CD4-positive, alpha-beta memory T cell (primary cell): ENCODE measurements at regions of chr17 and their contacts with region 1.

Region 1: DNA sequence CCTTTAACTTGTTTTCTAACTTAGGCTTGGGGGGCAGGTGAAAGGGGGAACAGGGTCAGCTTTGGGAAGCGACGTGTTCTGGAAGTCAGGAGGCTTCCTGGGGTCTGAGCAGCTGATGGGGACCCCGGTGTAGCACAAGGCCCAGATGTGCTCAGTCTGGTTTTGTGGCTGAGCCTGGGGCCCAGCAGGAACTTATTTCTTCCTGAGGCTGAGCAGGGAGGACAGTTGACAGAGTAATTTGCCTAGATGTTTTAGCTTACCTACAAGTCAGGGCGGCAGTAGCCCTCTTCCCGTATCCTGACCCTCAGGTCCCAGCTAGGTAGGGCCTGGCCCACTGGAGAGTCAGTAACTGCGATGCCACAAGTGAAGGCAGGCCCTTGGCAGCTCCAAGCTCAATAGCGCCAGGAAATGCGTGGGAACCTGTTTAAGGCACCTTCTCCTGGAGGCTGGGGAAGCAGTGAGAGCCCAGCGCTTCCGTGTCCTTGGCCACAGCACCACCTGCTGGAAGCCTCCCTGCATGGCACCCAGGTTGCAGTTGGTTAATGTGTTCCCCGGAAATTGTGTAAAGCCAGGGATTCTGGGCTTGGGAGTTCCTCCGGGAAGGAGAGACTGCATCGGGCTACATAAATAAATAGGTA is 5.2 kb downstream of the CCR7 start:
- DNase-seq: peak; percentile 77 to 84 (median 81)
- H3K4me3 ChIP-seq: peak overlapping the region; percentile 94 to 96
- H3K4me3 Mint-ChIP-seq: peak overlapping the region; percentile 88 to 98 (median 96)
- H3K27ac ChIP-seq: peak overlapping the region; percentile 94
- H3K27ac Mint-ChIP-seq: peak overlapping the region; percentile 95 to 100 (median 99)
- H3K4me1 ChIP-seq: peaks cover 82% of the 10 kb centered on the region
- H3K4me1 Mint-ChIP-seq: peaks cover 42 to 99% (median 72%) of the 10 kb centered on the region in 4 donors
- H3K27me3 ChIP-seq: no peaks in the 10 kb centered on the region
- H3K27me3 Mint-ChIP-seq: no peaks in the 10 kb centered on the region

Region 2: DNA sequence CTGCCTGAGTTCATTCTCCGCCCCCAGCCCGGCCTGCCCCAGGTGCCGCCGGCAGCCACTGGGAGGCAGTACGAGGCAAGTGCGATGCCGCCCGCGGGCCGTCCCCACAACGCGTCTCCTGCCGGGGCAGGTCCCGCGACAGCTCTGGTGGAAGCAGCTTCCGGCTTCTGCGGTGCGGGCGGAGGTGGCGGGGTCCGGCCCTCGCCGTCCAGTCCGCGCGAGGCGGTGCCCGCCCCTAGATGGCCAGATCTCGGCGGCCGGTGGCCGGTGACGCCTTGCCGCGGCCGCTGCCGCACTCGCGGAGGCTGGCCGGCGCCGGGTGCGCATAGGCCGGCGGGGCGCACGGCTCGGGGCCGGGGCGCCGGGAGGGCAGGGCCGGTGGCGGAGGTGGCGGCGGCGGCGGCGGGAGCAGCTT is 197.4 kb before region 1 on chr17:
- CTCF ChIA-PET with region 1: interaction called, 8 read pairs
- POLR2A ChIA-PET with region 1: interaction called, 13 read pairs
- intact Hi-C with region 1: loop called (anchors 1 kb)
- DNase-seq: peak; percentile 72 to 76 (median 74)
- H3K4me3 ChIP-seq: peak overlapping the region in 1 of 2 donors; percentile 47
- H3K4me3 Mint-ChIP-seq: peak overlapping the region in 7 of 8 donors; percentile 39 to 82 (median 64)
- H3K27ac ChIP-seq: no peak overlapping the region
- H3K27ac Mint-ChIP-seq: peak overlapping the region in 3 of 7 donors; percentile 11 to 69 (median 57)
- H3K4me1 ChIP-seq: peaks cover 21% of the 10 kb centered on the region
- H3K4me1 Mint-ChIP-seq: peaks cover 5 to 12% (median 9%) of the 10 kb centered on the region in 4 donors
- H3K27me3 ChIP-seq: no peaks in the 10 kb centered on the region
- H3K27me3 Mint-ChIP-seq: peaks cover 0 to 7% of the 10 kb centered on the region in 2 donors

Region 3: GRCh38 chr17:40417609-40418427 is 142.3 kb before region 1 on chr17 and contains the start of gene TOP2A:
- CTCF ChIA-PET with region 1: interaction called, 14 read pairs
- POLR2A ChIA-PET with region 1: interaction called, 23 read pairs
- intact Hi-C with region 1: loop called (anchors 5 kb)
- DNase-seq: peak; percentile 98 to 99 (median 98)
- H3K4me3 ChIP-seq: peak within 1 kb of the TSS; percentile 77 to 91
- H3K4me3 Mint-ChIP-seq: peak within 1 kb of the TSS; percentile 90 to 97 (median 95)
- H3K27ac ChIP-seq: peak within 1 kb of the TSS; percentile 49
- H3K27ac Mint-ChIP-seq: peak within 1 kb of the TSS; percentile 69 to 97 (median 93)
- H3K4me1 ChIP-seq: peaks cover 37% of the 10 kb centered on the region
- H3K4me1 Mint-ChIP-seq: peaks cover 15 to 35% (median 28%) of the 10 kb centered on the region in 4 donors
- H3K27me3 ChIP-seq: no peaks in the 10 kb centered on the region
- H3K27me3 Mint-ChIP-seq: no peaks in the 10 kb centered on the region
- total RNA-seq, gene TOP2A: 0.47 to 1.1 TPM

Region 4: GRCh38 chr17:40474419-40475002 is 85.6 kb before region 1 on chr17:
- CTCF ChIA-PET with region 1: interaction called, 24 read pairs
- POLR2A ChIA-PET with region 1: interaction called, 44 read pairs
- intact Hi-C with region 1: loop called (anchors 1 kb)
- DNase-seq: no peak
- H3K4me3 ChIP-seq: no peak overlapping the region
- H3K4me3 Mint-ChIP-seq: no peak overlapping the region
- H3K27ac ChIP-seq: no peak overlapping the region
- H3K27ac Mint-ChIP-seq: peak overlapping the region in 2 of 7 donors; percentile 18 to 68
- H3K4me1 ChIP-seq: peaks cover 32% of the 10 kb centered on the region
- H3K4me1 Mint-ChIP-seq: peaks cover 6 to 26% (median 6%) of the 10 kb centered on the region in 4 donors
- H3K27me3 ChIP-seq: no peaks in the 10 kb centered on the region
- H3K27me3 Mint-ChIP-seq: no peaks in the 10 kb centered on the region

Region 5: GRCh38 chr17:40542558-40543411 is 17.3 kb before region 1 on chr17:
- CTCF ChIA-PET with region 1: interaction called, 512 read pairs
- POLR2A ChIA-PET with region 1: interaction called, 1,088 read pairs
- intact Hi-C with region 1: loop called (anchors 1 kb)
- DNase-seq: peak in 4 of 5 donors; percentile 37 to 82 (median 50)
- H3K4me3 ChIP-seq: no peak overlapping the region
- H3K4me3 Mint-ChIP-seq: peak overlapping the region in 6 of 8 donors; percentile 67 to 94 (median 88)
- H3K27ac ChIP-seq: peak overlapping the region; percentile 69
- H3K27ac Mint-ChIP-seq: peak overlapping the region; percentile 94 to 100 (median 99)
- H3K4me1 ChIP-seq: peaks cover 90% of the 10 kb centered on the region
- H3K4me1 Mint-ChIP-seq: peaks cover 60 to 91% (median 75%) of the 10 kb centered on the region in 4 donors
- H3K27me3 ChIP-seq: no peaks in the 10 kb centered on the region
- H3K27me3 Mint-ChIP-seq: peaks cover 0 to 4% of the 10 kb centered on the region in 2 donors

Region 6: GRCh38 chr17:40598663-40599467 is 38.8 kb after region 1 on chr17:
- CTCF ChIA-PET with region 1: interaction called, 61 read pairs
- POLR2A ChIA-PET with region 1: interaction called, 1,226 read pairs
- intact Hi-C with region 1: loop called (anchors 2 kb)
- DNase-seq: peak; percentile 72 to 92 (median 77)
- H3K4me3 ChIP-seq: no peak overlapping the region
- H3K4me3 Mint-ChIP-seq: peak overlapping the region; percentile 67 to 89 (median 84)
- H3K27ac ChIP-seq: peak overlapping the region; percentile 92
- H3K27ac Mint-ChIP-seq: peak overlapping the region; percentile 94 to 100 (median 99)
- H3K4me1 ChIP-seq: peaks cover 88% of the 10 kb centered on the region
- H3K4me1 Mint-ChIP-seq: peaks cover 63 to 95% (median 78%) of the 10 kb centered on the region in 4 donors
- H3K27me3 ChIP-seq: no peaks in the 10 kb centered on the region
- H3K27me3 Mint-ChIP-seq: no peaks in the 10 kb centered on the region

Region 7: DNA sequence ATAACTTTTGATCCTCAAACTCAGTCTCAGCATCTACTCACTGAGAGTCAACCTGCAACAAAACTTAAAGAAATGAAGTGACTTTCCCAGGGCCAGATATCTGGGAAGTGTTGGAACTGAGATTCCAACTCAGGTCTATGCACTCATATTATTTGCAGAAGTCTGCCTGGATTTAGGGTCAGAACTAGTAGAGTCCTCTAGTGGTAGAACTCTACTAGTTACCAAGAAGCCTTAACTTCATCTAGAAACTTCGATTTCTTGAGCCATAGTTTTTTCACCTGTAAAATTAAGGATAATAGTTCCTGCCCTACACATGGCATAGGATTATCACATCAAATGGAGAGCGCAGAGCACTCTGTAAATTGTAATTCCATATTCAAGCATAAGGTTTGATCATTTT is 166.8 kb after region 1 on chr17:
- CTCF ChIA-PET with region 1: interaction called, 3 read pairs
- POLR2A ChIA-PET with region 1: no interaction called
- intact Hi-C with region 1: loop called (anchors 10 kb)
- DNase-seq: peak in 4 of 5 donors; percentile 11 to 27 (median 17)
- H3K4me3 ChIP-seq: no peak overlapping the region
- H3K4me3 Mint-ChIP-seq: no peak overlapping the region
- H3K27ac ChIP-seq: no peak overlapping the region
- H3K27ac Mint-ChIP-seq: no peak overlapping the region
- H3K4me1 ChIP-seq: no peaks in the 10 kb centered on the region
- H3K4me1 Mint-ChIP-seq: no peaks in the 10 kb centered on the region
- H3K27me3 ChIP-seq: peaks cover 10% of the 10 kb centered on the region
- H3K27me3 Mint-ChIP-seq: peaks cover 14 to 19% of the 10 kb centered on the region in 2 donors